Gastrocnemius medialis (tissue), 4 donors: ENCODE measurements at regions of chr22 and their contacts with region 1.

Region 1: GRCh38 chr22:20568989-20569769 is 61.8 kb downstream of the MED15 start:
- DNase-seq: peak; percentile 81 to 88
- ATAC-seq: peak; percentile 89 to 93
- H3K4me3 ChIP-seq: no peak overlapping the region
- H3K27ac ChIP-seq: peak overlapping the region; percentile 69 to 87 (median 78)
- H3K4me1 ChIP-seq: peaks cover 12 to 20% of the 10 kb centered on the region in 2 donors
- H3K27me3 ChIP-seq: no peaks in the 10 kb centered on the region
- CTCF ChIP-seq: no peak
- POLR2A ChIP-seq: no peak

Region 2: DNA sequence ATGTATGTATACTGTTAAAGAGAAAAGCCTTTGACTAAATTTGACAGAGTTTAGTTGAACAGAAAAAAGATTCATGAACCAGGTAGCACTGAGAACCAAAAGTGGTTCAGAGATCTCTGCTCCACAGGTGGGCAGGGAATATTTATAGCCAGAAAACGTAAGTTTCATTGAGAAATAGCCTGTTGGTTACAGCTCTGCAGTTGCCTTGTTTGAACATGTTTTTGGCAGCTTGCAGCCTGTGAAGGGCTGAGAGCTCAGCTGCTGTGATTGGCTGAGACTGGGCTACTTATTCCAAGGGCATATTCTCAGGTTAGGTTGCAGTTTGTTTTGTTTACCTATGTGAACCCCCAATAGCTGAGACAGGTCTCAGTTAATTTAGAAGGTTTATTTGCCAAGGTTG is 188.7 kb before region 1 on chr22:
- in situ Hi-C with region 1: no loop called
- intact Hi-C with region 1: no loop called
- DNase-seq: no peak
- ATAC-seq: no peak
- H3K4me3 ChIP-seq: no peak overlapping the region
- H3K27ac ChIP-seq: no peak overlapping the region
- H3K4me1 ChIP-seq: no peaks in the 10 kb centered on the region
- H3K27me3 ChIP-seq: peaks cover 0 to 7% (median 3%) of the 10 kb centered on the region in 3 donors
- CTCF ChIP-seq: no peak
- POLR2A ChIP-seq: no peak

Region 3: DNA sequence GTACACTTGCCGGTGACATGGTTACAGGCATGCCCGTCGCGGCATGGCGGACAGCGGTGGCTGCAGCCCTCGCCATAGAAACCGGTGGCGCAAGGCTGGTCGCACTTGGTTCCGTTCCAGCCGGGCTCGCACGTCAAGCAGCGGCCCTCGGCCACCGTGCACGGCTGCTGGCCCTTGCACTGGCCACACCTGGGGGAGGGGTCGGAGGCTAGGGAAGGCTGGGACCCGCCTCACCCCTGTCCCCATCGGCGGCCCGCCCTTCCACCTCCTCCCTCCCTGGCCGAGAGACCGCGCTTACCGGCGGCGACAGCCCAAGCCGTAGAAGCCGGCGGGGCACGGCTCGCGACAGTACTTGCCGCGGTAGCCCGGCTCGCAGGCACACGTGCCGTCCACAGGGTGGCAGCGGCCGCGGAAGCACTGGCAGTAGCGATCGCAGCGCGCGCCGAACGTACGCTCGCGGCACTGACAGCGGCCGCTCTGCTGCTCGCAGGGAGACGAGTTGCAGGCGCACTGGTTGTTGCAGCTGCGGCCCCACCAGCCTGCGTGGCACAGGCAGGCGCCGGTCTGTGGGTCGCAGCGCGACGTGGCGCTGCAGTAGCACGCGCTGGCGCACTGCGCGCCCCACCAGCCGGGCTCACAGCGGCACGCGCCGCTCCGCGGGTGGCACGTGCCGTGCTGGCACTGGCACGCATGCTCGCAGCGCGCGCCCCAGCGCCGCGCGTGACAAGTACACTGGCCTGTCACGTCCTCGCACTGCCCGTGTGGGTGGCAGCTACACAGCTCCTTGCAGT is 138.3 kb before region 1 on chr22:
- in situ Hi-C with region 1: no loop called
- intact Hi-C with region 1: loop called (anchors 10 kb)
- DNase-seq: peak in 1 of 2 donors; percentile 34
- ATAC-seq: peak; percentile 59 to 77
- H3K4me3 ChIP-seq: peak overlapping the region; percentile 25 to 50 (median 37)
- H3K27ac ChIP-seq: no peak overlapping the region
- H3K4me1 ChIP-seq: peaks cover 0 to 6% of the 10 kb centered on the region in 2 donors
- H3K27me3 ChIP-seq: peaks cover 6 to 13% (median 12%) of the 10 kb centered on the region in 3 donors
- CTCF ChIP-seq: peak; percentile 19 to 61 (median 47)
- POLR2A ChIP-seq: no peak

Region 4: GRCh38 chr22:20507253-20508066 is 61.7 kb before region 1 on chr22 and contains the start of gene MED15:
- in situ Hi-C with region 1: loop called in 1 of 4 experiments (anchors 10 kb)
- intact Hi-C with region 1: loop called (anchors 2 kb)
- DNase-seq: peak; percentile 89 to 90
- ATAC-seq: peak; percentile 85 to 89
- H3K4me3 ChIP-seq: peak within 1 kb of the TSS; percentile 74 to 99 (median 90)
- H3K27ac ChIP-seq: peak within 1 kb of the TSS; percentile 94 to 99 (median 98)
- H3K4me1 ChIP-seq: peaks cover 34 to 51% of the 10 kb centered on the region in 2 donors
- H3K27me3 ChIP-seq: no peaks in the 10 kb centered on the region
- CTCF ChIP-seq: no peak
- POLR2A ChIP-seq: peak; percentile 95 to 97
- total RNA-seq, gene MED15: 37.5 to 69.4 (median 52.7) TPM

Region 5: DNA sequence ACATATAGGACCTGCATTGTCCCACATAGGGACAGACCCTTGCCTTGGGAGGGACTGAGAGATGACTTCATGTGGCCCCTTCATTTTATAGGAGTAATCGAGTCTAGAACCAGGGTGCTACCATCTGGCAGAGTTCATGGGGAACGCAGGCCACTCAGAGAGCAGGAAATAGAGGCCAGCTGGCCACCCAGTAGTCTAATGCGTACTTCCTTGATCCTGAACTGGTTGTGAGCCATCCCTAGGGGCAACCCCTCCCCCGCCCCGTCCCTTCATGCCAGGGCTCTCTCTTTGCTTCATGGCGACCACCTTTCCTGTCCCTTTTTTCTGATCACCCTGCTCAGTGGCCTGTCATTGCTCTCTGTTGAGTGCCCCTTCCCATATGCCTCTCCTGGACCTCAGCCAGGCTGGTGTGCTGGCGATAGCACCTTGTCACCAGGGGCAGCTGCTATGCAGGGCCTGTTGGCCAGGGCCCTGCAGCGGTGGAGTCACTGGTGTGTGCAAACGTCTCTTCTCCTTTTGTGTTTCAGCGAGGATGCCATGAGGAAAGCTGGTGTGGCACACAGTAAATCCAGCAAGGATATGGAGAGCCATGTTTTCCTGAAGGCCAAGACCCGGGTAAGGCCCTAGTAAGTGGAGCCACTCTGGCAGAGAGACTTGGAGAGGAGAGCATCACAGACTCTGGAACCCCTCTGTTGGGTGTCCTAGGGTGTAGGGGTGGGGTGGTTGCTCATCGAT is 32.4 kb before region 1 on chr22:
- in situ Hi-C with region 1: no loop called
- intact Hi-C with region 1: loop called (anchors 1 kb)
- DNase-seq: peak in 1 of 2 donors; percentile 31
- ATAC-seq: peak; percentile 32 to 57
- H3K4me3 ChIP-seq: no peak overlapping the region
- H3K27ac ChIP-seq: peak overlapping the region; percentile 43 to 61 (median 49)
- H3K4me1 ChIP-seq: peaks cover 29 to 37% of the 10 kb centered on the region in 2 donors
- H3K27me3 ChIP-seq: no peaks in the 10 kb centered on the region
- CTCF ChIP-seq: no peak
- POLR2A ChIP-seq: no peak